Activated B cell treated with CpG ODN at 0.5 μM for 24 hours (primary cell): ENCODE measurements at regions of chr16 and their contacts with region 1.

Region 1: DNA sequence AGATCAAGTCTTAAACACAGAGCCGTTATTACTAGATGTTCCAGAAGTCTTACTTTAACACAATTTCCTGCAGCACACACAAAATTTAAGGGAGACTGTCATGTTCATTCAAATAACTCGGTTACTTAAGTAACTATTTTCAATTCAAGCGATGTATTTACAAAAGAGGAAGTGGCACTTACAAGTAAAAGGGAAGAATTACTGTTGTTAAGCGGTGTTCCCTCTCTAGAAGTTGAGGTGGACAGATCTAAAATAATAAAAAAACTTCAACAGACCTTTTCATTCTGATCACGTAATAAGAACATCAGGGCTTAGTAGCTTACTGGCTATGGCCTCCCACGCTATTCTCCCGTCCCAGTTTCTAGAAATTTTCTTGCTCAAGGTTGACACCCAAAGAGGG is 26.2 kb upstream of the TXNDC11 start:
- DNase-seq: no peak
- ATAC-seq: peak; percentile 79
- H3K4me3 Mint-ChIP-seq: peak overlapping the region; percentile 61
- H3K27ac Mint-ChIP-seq: peak overlapping the region; percentile 90
- H3K4me1 Mint-ChIP-seq: peaks cover 50% of the 10 kb centered on the region
- H3K27me3 Mint-ChIP-seq: no peaks in the 10 kb centered on the region
- CTCF ChIP-seq: no peak

Region 2: GRCh38 chr16:11797166-11797956 is 28.5 kb after region 1 on chr16 and contains the start of gene ZC3H7A:
- CTCF ChIA-PET with region 1: interaction called, 6 read pairs
- POLR2A ChIA-PET with region 1: interaction called, 21 read pairs
- intact Hi-C with region 1: loop called (anchors 1 kb)
- DNase-seq: peak; percentile 94
- ATAC-seq: peak; percentile 97
- H3K4me3 Mint-ChIP-seq: peak within 1 kb of the TSS; percentile 95
- H3K27ac Mint-ChIP-seq: peak within 1 kb of the TSS; percentile 96
- H3K4me1 Mint-ChIP-seq: peaks cover 73% of the 10 kb centered on the region
- H3K27me3 Mint-ChIP-seq: no peaks in the 10 kb centered on the region
- CTCF ChIP-seq: no peak
- total RNA-seq, gene ZC3H7A: 143 and 163 TPM in 2 replicates

Region 3: GRCh38 chr16:11833951-11834695 is 65.3 kb after region 1 on chr16:
- CTCF ChIA-PET with region 1: no interaction called
- POLR2A ChIA-PET with region 1: no interaction called
- intact Hi-C with region 1: no loop called
- DNase-seq: no peak
- ATAC-seq: no peak
- H3K4me3 Mint-ChIP-seq: no peak overlapping the region
- H3K27ac Mint-ChIP-seq: no peak overlapping the region
- H3K4me1 Mint-ChIP-seq: no peaks in the 10 kb centered on the region
- H3K27me3 Mint-ChIP-seq: no peaks in the 10 kb centered on the region
- CTCF ChIP-seq: no peak

Region 4: GRCh38 chr16:11851294-11852091 is 82.6 kb after region 1 on chr16 and contains the start of gene RSL1D1:
- CTCF ChIA-PET with region 1: no interaction called
- POLR2A ChIA-PET with region 1: no interaction called
- intact Hi-C with region 1: no loop called
- DNase-seq: peak; percentile 98
- ATAC-seq: peak; percentile 78
- H3K4me3 Mint-ChIP-seq: peak within 1 kb of the TSS; percentile 98
- H3K27ac Mint-ChIP-seq: peak within 1 kb of the TSS; percentile 91
- H3K4me1 Mint-ChIP-seq: peaks cover 51% of the 10 kb centered on the region
- H3K27me3 Mint-ChIP-seq: no peaks in the 10 kb centered on the region
- CTCF ChIP-seq: no peak
- total RNA-seq, gene RSL1D1: 224 and 265 TPM in 2 replicates